ENCODE measurements at regions of chr1 and their contacts with region 1.

Region 1: DNA sequence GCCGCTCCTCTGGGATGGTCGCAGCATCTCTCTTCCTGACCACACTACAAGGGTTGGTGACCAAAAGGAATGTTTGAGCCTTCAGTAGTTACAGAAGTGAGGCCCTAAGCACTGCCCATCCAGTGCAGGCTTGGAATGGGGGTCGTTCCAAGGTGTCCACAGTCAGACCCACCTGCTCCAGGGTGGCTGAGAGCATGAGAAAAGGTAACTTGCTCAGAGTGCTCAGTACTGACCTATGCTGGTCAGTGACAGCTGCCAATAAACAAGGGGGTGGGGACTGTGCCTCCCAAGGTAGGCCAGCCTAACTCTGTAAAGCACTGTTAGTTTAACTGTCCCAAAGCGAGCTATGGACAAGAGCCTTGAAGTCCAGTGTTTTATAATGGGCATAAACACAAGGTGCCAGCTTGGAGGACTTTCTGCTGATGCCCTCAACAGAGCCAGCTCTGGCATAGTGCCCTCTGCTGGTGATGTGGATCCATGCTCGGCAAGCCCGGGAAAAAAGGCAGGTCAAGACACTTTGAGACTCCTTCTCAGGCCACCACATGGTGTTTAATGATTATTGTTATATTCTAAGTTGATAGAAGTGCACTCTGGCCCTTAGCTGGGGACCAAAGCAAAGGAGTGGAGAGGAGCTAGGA is 78.1 kb upstream of the DNAH14 start:
- DNase-seq: peak; percentile 70
- ATAC-seq: no peak

Region 2: DNA sequence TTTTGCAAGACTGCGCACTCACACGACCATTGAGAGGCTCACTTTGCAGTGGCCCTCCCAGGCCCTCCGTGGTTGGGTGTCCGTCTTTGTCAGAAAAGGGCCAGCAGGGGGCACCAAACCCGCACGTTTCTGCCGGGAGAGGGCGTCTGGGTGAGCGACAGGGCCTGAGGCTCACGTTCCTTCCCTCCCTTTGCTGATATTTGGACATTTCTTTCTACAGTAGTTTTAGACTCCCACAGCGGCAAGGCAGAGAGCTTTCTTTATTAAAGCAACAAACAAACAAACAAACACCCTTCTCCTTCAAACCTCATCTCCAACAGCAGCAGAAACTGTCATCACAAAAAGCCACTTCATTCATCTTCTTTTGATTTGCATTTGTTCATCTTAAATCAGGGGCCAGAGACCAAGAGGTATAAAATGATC is 337.5 kb before region 1 on chr1:
- intact Hi-C with region 1: loop called (anchors 1 kb)
- DNase-seq: peak; percentile 89
- ATAC-seq: peak; percentile 91

Region 3: GRCh38 chr1:224644553-224645154 is 206.7 kb before region 1 on chr1:
- intact Hi-C with region 1: loop called (anchors 5 kb)
- DNase-seq: no peak
- ATAC-seq: no peak

Measured in Right ventricle myocardium inferior (tissue), 1 donor.